Lower leg skin (tissue), 4 donors: ENCODE measurements at regions of chr17 and their contacts with region 1.

Region 1: DNA sequence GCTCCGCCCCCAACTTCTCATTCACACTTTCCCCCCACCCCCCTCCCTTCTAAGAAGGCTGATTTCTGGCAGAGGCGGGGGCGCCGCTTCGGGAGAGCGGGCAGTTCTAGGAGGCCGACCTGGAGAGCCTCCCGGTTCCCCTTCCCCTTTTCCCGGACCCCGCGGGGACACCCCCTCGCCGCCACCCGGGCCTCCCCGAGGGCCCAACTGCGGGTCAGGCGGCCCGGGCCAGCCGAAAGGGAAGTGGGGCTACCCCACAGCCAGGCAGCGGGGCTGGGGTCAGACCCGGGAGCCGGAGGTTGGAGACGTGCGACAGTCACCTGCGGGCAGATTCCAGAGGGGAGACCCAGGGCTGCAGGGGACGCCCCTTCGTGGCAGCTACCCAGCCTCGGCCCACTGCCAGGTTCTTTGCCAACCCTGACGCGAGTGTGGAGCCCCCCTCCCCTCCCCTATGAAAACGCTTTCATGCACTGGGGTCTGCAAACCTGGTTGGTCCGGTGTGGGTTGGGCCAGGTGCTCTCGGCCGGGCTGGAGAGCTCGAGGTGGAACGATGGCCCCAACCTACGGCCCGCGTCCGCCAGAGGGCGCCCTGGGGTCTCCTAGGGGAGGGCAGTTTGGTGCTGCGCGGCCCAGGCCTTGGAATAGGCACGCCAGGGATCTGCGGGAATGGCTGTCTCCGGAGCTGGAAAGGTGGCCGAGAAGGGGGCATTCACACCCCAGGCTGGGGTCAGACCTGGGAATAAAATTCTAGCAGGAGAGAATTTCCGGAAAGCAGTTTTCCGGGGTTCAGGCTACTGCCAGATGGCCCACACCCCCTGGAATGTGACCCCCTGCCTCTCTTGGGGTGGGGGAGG is 721 bp upstream of the SOCS3 start:
- DNase-seq: peak; percentile 86 to 98
- H3K4me3 ChIP-seq: no peak overlapping the region
- CTCF ChIP-seq: peak in 1 of 3 donors; percentile 91
- POLR2A ChIP-seq: no peak

Region 2: DNA sequence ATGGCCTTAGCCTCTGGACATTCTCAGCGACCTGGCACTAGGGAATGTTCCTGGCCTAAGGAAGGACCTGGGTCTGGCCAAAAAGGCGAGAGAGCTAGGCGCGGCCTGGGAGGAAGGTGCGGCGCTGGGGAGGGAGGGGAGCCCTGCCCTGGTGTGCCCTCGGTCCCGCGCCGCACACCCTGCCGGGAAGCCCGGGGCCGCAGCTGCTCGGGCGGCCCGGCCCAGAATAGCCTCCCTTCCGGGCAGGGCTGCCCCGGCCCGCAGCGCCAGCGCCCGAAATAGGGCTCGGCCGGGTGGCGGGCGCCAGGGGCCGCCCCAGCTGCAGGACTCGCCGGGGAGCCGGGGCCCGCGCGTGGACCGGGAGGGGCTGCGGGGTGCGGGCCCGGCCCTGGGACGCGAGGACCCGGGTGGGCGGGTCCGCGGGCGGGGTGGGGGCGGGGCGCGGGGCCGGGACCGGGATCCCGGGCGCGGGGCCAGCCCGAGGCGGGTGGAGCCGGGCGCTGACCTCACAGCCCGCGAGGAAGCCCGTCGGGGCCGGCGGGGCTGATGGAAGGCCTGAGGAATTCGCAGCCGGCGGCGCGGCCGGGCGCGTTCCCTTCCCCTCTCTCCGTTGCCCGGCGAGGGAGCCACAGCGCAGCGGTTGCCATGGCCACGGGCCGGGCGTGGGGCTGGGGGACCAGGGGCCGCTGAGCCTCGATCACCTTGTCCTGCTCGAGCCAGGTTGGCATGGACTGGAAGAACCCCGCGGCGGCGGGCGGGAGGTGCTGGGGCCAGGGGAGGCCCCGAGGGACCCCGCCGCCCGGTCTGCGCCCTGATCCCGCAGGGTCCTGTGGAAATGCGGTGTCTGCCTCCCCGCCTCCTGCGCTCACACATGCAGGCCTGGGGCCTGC is 18.8 kb before region 1 on chr17:
- intact Hi-C with region 1: loop called (anchors 1 kb)
- DNase-seq: peak in 1 of 2 donors; percentile 93
- H3K4me3 ChIP-seq: no peak overlapping the region
- CTCF ChIP-seq: no peak
- POLR2A ChIP-seq: no peak

Region 3: DNA sequence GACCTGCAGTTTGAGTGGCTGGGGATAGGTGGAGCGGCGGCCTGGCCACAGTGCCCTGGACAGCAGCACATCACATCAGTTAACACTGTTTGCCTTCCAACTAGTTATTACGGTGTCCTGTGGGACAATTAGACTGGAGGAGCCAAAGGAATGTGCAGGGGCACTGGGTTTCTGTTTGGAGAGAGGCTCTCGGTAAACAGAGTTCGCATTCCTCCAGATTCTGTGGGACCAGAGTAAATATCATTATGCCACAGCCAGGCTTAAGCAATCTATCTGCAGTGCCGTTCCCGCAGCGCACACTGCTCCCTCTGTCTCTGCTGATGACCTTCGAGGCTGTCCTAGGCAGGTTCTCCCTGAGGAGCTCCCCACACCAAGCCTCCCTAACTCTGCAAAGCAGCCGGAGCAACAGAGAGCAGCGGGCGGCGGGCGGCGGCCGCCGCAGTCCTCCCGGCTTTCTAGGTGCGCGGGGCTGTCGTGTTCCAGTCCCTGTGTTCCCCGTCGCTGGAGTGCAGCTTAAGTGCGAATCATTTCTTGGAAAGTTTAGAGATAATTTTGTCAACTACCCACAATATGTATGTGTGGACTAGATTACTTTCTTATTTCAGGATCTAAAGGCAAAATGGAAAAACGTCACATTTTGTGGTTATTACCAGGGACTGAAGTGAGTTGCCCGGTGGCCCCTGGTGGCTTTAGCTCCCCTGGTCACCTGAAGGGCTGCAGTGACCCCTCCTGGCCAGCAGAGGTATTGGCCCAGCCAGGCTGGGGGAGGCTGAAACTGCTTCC is 61.1 kb after region 1 on chr17:
- intact Hi-C with region 1: loop called (anchors 2 kb)
- DNase-seq: peak; percentile 55 to 94
- H3K4me3 ChIP-seq: no peak overlapping the region
- CTCF ChIP-seq: peak in 1 of 3 donors; percentile 79
- POLR2A ChIP-seq: no peak